Endothelial cell of umbilical vein (primary cell): ENCODE measurements at regions of chr11 and their contacts with region 1.

Region 1: DNA sequence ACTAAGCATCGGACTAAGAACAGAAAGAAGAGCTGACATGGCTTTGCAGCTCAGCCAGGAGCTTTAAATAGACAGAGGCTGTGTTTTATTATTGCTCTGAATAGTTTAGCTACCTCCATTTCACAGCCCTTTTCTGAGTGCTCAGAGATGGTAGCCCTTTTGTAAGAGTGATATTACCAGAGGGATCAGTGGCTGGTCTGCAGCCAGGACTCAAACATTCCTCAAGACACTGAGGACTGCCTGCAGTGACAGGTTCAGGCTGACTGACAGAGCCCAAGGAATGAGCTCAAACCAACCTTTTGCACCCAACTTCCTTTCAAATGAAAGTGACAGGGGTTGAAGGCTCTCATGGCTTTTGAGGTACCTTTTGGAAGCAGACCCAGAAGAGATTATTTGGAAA is 189.0 kb downstream of the DDX10 start:
- DNase-seq: peak; percentile 49
- H3K4me3 ChIP-seq: peak overlapping the region in 1 of 3 experiments; percentile 71
- H3K27ac ChIP-seq: peak overlapping the region; percentile 70
- H3K4me1 ChIP-seq: peaks cover 32% of the 10 kb centered on the region
- H3K27me3 ChIP-seq: no peaks in the 10 kb centered on the region
- CTCF ChIP-seq: no peak
- POLR2A ChIP-seq: no peak

Region 2: DNA sequence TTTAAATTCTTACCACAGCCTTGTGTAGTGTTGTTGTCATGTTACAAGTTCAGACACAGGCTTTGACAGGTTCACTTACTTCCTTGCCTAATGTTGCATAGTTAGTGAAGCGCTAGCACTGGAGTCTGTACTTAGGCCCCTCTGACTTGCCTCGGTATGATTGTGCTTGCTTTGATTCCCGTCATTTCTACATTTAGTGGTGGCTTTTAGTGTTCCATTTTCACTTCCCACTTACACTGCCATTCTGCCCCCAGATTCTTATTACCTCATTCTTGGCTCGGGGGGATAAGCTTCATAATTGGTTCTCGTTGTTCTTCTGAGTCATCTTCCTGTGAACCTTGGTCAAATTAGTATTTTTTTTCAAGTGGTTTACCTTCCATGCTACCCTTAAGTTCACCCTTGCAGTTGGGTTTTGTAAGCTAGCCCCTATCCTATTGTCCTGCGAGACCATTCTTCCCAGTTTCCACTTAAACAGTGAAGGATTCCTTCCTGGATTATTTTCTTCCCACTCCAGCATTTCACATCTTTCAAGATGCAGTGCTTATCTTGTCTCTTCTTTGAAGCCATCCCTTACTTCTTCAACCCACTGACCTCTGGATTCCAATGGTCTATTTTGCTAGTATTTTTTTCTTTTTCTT is 120.3 kb before region 1 on chr11:
- CTCF ChIA-PET with region 1: interaction called, 10 read pairs
- POLR2A ChIA-PET with region 1: no interaction called
- dilution Hi-C with region 1: no loop called
- intact Hi-C with region 1: no loop called
- DNase-seq: peak; percentile 63
- H3K4me3 ChIP-seq: no peak overlapping the region
- H3K27ac ChIP-seq: peak overlapping the region; percentile 52
- H3K4me1 ChIP-seq: peaks cover 23% of the 10 kb centered on the region
- H3K27me3 ChIP-seq: no peaks in the 10 kb centered on the region
- CTCF ChIP-seq: no peak
- POLR2A ChIP-seq: no peak

Region 3: GRCh38 chr11:108788565-108789199 is 65.2 kb before region 1 on chr11:
- CTCF ChIA-PET with region 1: interaction called, 14 read pairs
- POLR2A ChIA-PET with region 1: no interaction called
- dilution Hi-C with region 1: no loop called
- intact Hi-C with region 1: no loop called
- DNase-seq: peak; percentile 58
- H3K4me3 ChIP-seq: no peak overlapping the region
- H3K27ac ChIP-seq: no peak overlapping the region
- H3K4me1 ChIP-seq: no peaks in the 10 kb centered on the region
- H3K27me3 ChIP-seq: no peaks in the 10 kb centered on the region
- CTCF ChIP-seq: peak; percentile 43 to 55
- POLR2A ChIP-seq: no peak

Region 4: DNA sequence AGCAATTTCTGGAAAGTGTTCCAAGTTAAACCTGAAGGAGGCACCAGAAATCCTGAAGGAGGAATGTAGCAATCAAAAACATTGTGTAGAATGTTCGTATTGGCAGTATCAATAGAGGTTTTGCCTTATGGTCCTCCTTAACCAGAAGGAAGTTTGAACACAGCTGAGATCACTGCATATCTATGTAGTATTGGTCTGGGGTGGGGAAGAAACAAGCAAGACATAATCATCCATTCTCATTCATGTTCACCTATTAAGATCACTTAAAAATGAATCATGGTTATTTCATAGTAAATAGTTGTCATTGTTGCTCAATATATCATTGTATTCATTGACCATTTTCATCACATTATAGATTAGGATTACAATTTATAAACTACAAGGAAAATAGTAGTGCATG is 28.5 kb before region 1 on chr11:
- CTCF ChIA-PET with region 1: interaction called, 3 read pairs
- POLR2A ChIA-PET with region 1: no interaction called
- dilution Hi-C with region 1: no loop called
- intact Hi-C with region 1: loop called (anchors 1 kb)
- DNase-seq: peak; percentile 13
- H3K4me3 ChIP-seq: no peak overlapping the region
- H3K27ac ChIP-seq: no peak overlapping the region
- H3K4me1 ChIP-seq: peaks cover 9% of the 10 kb centered on the region
- H3K27me3 ChIP-seq: no peaks in the 10 kb centered on the region
- CTCF ChIP-seq: no peak
- POLR2A ChIP-seq: no peak

Region 5: DNA sequence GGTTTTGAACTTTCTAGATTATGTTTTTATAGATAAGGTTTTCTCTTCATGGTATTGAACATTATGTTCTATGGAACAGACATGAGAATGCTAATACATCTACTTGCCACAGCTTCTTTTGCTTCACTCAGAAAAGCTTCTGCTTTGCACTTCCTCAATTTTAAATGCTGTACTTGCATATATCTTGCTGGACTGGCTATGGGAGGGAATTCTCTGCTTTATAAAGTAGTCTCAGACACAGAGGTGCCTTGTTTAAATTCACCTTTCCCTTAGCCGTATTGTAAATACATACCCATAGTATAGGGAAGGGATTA is 15.1 kb before region 1 on chr11:
- CTCF ChIA-PET with region 1: interaction called, 12 read pairs
- POLR2A ChIA-PET with region 1: no interaction called
- dilution Hi-C with region 1: no loop called
- intact Hi-C with region 1: loop called (anchors 2 kb)
- DNase-seq: no peak
- H3K4me3 ChIP-seq: no peak overlapping the region
- H3K27ac ChIP-seq: no peak overlapping the region
- H3K4me1 ChIP-seq: no peaks in the 10 kb centered on the region
- H3K27me3 ChIP-seq: no peaks in the 10 kb centered on the region
- CTCF ChIP-seq: no peak
- POLR2A ChIP-seq: no peak

Region 6: DNA sequence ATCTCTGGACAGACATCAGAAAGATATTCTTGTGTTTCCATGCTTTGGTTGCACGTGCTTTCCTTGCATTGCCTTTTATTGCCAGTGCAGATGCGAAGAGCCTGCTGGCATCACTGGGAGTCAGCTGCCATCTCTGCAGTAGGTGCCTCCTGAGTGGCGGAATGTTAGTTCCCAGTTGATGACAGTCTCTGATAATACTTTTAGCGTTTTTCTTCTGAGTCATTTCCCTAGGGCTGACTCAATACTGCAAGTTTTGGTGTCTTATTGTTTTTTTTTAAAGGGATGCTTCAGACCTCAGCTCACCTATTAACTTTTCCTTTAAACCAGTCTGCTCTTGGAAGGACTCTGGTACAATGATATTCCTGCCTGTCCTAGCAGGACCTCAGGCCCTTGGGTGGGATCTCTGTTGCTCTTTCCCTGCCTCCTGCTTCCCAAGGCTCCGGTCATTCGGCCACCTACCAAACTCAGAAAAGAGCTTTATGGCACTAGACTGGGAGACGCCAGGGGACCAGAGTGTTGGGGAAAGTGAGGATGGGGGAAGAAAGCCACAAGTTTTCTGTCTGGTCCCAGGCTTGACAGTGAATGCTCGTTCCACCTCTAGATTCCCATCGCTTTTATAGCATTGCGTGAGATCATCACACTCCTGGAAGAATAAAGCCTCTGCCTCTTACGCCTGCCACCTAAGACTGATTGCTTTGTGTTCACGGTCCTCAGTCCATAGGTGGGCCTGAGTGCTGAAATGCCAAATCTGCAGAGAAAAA is 119.7 kb after region 1 on chr11:
- CTCF ChIA-PET with region 1: no interaction called
- POLR2A ChIA-PET with region 1: interaction called, 12 read pairs
- dilution Hi-C with region 1: no loop called
- intact Hi-C with region 1: no loop called
- DNase-seq: peak; percentile 71
- H3K4me3 ChIP-seq: no peak overlapping the region
- H3K27ac ChIP-seq: peak overlapping the region; percentile 42
- H3K4me1 ChIP-seq: peaks cover 14% of the 10 kb centered on the region
- H3K27me3 ChIP-seq: no peaks in the 10 kb centered on the region
- CTCF ChIP-seq: no peak
- POLR2A ChIP-seq: no peak